ENCODE measurements at regions of chr17 and their contacts with region 1.

Region 1: GRCh38 chr17:19270689-19271611 is 33.8 kb downstream of the EPN2 start:
- DNase-seq: peak; percentile 18
- ATAC-seq: peak; percentile 88
- H3K4me3 Mint-ChIP-seq: peak overlapping the region; percentile 60
- H3K27ac Mint-ChIP-seq: peak overlapping the region; percentile 51
- H3K4me1 Mint-ChIP-seq: peaks cover 34% of the 10 kb centered on the region
- H3K27me3 Mint-ChIP-seq: no peaks in the 10 kb centered on the region
- CTCF ChIP-seq: no peak

Region 2: DNA sequence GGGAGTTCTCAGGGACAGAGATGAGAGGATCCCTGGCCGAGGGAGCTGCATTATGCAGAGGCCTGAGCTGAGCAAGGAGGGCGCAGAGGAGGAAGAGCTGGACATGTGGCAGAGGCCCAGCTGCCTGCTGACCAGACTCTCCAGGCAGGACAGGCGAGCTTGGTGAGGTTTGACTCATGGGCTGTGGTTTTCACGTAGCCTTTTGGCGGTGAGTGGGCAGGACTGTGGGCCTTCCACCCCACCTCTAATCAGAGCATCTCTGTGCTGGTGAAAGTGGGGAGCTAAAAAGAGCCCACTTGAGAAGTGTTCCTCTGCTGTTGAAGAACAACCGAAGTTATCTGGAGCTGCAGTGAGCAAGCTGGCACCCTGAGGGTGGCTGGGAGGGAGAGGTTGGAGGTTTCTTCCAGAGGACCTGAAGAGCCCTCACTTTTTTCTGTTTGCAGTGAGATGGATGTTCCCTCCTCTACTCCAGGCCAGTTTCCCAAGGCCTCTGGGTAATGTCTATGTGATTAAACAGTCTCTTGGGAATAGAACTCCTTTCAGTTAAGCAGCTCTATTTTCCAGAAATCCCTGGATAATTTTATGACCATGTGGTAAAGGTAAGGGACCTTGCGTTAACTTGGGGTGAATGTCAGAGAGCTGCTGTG is 21.9 kb before region 1 on chr17:
- CTCF ChIA-PET with region 1: no interaction called
- POLR2A ChIA-PET with region 1: no interaction called
- intact Hi-C with region 1: no loop called
- DNase-seq: no peak
- ATAC-seq: no peak
- H3K4me3 Mint-ChIP-seq: no peak overlapping the region
- H3K27ac Mint-ChIP-seq: no peak overlapping the region
- H3K4me1 Mint-ChIP-seq: peaks cover 21% of the 10 kb centered on the region
- H3K27me3 Mint-ChIP-seq: no peaks in the 10 kb centered on the region
- CTCF ChIP-seq: no peak

Region 3: DNA sequence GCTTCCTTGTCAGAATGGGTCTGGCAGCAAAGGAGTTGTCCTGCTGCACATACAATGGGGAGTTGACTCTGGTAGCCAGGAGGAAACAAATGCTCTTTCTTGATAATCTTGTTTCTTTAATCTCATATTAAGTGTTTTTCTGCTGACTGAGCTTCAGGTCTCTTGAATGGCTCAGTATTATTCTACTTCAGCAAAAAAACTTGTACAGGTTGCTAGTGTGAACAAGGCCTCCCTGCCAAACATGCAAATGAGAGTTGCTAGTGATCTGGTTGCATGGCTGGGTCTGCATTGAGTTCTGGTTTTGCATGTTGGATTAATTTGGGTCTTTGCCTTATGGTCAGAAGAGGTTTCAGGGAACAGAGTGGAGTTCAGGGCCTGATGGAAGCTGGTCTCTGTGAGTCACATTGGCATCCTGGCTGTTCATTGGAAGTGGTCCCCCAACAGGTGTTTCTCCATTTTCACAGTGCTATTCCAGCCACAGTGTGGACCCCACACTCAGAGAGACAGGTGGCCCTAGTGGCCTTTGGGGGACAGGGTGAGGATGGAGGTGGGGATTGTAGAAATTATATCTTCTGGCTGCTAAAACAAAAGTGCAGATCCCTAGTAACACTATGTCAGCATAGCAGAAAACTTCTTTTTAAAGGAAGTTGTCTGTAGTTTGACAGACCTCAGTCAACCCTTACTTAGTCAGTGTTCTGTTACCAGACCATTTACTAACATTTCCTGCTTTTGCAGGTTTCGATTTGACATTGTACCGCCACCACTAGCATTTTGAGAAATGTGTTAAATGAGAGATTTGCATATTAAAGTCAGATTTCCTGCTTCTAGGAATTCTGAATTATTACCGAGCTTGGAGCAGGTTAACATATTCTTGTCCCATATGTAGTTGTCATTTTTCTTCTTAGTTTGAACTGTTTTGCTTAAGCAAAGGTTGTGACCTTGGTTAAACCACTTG is 13.3 kb after region 1 on chr17:
- CTCF ChIA-PET with region 1: no interaction called
- POLR2A ChIA-PET with region 1: no interaction called
- intact Hi-C with region 1: loop called (anchors 1 kb)
- DNase-seq: no peak
- ATAC-seq: peak; percentile 83
- H3K4me3 Mint-ChIP-seq: peak overlapping the region; percentile 39
- H3K27ac Mint-ChIP-seq: peak overlapping the region; percentile 37
- H3K4me1 Mint-ChIP-seq: peaks cover 27% of the 10 kb centered on the region
- H3K27me3 Mint-ChIP-seq: peaks cover 14% of the 10 kb centered on the region
- CTCF ChIP-seq: no peak